Naive thymus-derived CD8-positive, alpha-beta T cell (primary cell): ENCODE measurements at regions of chr14 and their contacts with region 1.

Region 1: DNA sequence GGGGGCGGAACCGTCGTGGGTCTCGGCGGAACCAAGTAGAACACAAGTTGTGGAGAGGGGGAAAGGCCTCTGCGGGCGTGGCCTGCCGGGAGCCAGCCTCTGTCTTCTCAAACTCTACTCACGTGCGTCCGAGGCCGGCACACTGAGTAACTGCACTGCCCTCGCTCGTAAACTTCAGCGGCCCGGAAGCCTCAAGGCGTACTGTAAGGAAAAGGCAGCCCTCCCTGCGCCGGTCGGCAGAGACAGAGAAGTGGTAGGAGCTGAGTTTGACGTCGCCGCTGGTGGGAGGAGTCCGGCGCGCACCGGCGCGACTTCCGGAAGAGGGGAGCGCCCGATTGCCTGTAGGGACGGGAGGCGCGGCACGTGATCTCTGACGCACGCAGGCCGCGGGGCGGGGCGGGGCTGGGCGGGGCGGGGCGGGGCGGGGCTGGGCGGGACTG is at the start of gene FBXO33:
- DNase-seq: peak; percentile 92 to 99 (median 98)
- ATAC-seq: peak; percentile 81 to 84
- H3K4me3 Mint-ChIP-seq: peak within 1 kb of the TSS; percentile 88 to 100 (median 99)
- H3K27ac Mint-ChIP-seq: peak within 1 kb of the TSS; percentile 100
- H3K4me1 Mint-ChIP-seq: peaks cover 21 to 50% (median 41%) of the 10 kb centered on the region in 4 donors
- H3K27me3 Mint-ChIP-seq: no peaks in the 10 kb centered on the region
- polyA plus RNA-seq, gene FBXO33: 14.7 to 24.1 (median 19.3) TPM

Region 2: GRCh38 chr14:39102969-39103957 is 328.9 kb before region 1 on chr14 and contains the start of gene SEC23A:
- POLR2A ChIA-PET with region 1: interaction called, 29 read pairs
- DNase-seq: peak; percentile 67 to 91 (median 74)
- ATAC-seq: peak; percentile 90 to 93
- H3K4me3 Mint-ChIP-seq: peak within 1 kb of the TSS; percentile 89 to 98 (median 96)
- H3K27ac Mint-ChIP-seq: peak within 1 kb of the TSS; percentile 93 to 99 (median 97)
- H3K4me1 Mint-ChIP-seq: peaks cover 20 to 57% (median 44%) of the 10 kb centered on the region in 4 donors
- H3K27me3 Mint-ChIP-seq: no peaks in the 10 kb centered on the region
- polyA plus RNA-seq, gene SEC23A: 21.0 to 28.5 (median 23.6) TPM

Region 3: DNA sequence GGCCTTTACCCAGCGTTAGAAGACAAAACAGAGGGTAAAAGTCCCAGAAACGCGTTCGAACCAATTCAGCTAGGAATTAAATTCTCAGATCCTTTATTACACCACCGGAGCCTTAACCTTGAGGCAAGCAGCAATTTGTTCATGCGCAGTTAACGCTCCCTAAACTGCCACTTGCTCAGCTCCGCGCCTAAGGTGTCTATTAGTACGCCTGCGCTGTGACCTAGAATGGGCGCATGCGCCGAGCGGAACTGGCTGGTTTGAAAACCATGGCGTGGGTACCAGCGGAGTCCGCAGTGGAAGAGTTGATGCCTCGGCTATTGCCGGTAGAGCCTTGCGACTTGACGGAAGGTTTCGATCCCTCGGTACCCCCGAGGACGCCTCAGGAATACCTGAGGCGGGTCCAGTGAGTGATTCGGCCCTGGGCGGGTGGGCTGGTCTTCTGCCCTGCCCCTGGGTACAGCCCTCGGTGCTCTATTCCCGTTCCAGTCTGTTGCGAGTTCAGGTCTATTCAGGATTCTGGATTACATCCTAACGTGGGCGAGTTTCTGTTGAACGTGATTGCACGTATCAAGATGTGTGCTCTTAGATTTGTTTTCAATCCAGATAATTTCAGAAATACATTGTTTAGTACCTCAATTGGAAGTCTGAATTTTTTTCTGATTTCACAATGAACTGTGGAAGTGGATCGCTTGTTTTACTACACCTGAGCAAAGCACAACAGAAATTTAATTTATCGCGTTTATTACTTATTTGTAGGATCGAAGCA is 317.9 kb before region 1 on chr14 and contains the start of gene GEMIN2:
- POLR2A ChIA-PET with region 1: interaction called, 24 read pairs
- DNase-seq: peak; percentile 87 to 97 (median 94)
- ATAC-seq: peak; percentile 97 to 98
- H3K4me3 Mint-ChIP-seq: peak within 1 kb of the TSS; percentile 94 to 99 (median 97)
- H3K27ac Mint-ChIP-seq: peak within 1 kb of the TSS; percentile 92 to 98 (median 97)
- H3K4me1 Mint-ChIP-seq: peaks cover 6 to 33% (median 19%) of the 10 kb centered on the region in 4 donors
- H3K27me3 Mint-ChIP-seq: no peaks in the 10 kb centered on the region
- polyA plus RNA-seq, gene GEMIN2: 10.5 to 17.0 (median 12.7) TPM

Region 4: DNA sequence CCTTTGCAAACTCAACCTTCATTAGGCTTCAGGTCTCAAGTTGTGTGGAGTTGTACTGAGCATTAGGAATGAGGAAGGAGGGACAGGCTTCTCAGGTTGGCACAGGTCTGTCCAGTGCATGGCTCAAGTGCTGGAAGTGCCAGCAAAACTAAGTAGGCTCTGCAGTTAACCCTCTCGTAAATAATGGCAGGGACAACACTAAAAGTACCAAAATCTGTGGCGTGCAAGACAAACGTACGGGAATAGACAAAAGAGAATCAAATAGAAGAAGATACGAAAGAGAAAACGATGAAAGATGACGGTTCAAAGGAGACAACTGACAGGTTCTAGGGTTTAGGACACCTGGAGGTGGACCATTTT is 262.7 kb before region 1 on chr14:
- POLR2A ChIA-PET with region 1: interaction called, 59 read pairs
- DNase-seq: no peak
- ATAC-seq: no peak
- H3K4me3 Mint-ChIP-seq: peak overlapping the region; percentile 82 to 99 (median 94)
- H3K27ac Mint-ChIP-seq: peak overlapping the region; percentile 98 to 100 (median 99)
- H3K4me1 Mint-ChIP-seq: peaks cover 23 to 58% (median 45%) of the 10 kb centered on the region in 4 donors
- H3K27me3 Mint-ChIP-seq: no peaks in the 10 kb centered on the region

Region 5: DNA sequence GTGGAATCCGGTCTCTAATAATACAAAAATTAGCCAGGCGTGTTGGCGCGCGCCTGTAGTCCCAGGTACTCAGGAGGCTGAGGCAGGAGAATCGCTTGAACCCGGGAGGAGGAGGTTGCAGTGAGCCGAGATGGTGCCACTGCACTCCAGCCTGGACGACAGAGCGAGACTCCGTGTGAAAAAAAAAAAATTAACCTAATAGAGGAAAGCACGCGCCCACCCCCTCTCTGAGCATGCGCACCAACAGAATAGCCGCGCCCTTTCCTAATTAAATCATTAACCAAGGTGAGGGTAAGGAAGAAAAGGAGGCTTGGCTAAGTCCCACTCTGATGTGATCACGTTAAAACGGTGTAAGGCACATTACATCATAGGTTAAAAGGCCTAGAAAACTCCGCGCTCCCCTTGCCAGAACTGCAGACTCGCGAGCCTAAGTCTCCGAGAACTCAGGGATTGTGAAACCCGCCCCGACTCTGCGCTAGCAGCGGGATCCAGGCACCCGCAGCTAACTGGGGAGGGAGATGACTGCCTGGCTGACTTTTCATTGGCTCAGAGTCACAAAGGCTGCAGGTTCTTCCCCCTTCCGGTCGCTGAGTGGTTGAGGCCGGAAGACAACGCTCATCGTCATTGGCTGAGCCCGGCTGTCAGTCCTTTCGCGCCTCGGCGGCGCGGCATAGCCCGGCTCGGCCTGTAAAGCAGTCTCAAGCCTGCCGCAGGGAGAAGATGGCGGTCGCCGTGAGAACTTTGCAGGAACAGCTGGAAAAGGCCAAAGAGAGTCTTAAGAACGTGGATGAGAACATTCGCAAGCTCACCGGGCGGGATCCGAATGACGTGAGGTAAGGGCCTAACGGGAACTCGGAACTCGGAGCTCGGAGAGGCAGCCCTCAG is 257.4 kb before region 1 on chr14 and contains the start of gene PNN:
- POLR2A ChIA-PET with region 1: interaction called, 59 read pairs
- DNase-seq: peak; percentile 85 to 99 (median 98)
- ATAC-seq: peak; percentile 86 to 90
- H3K4me3 Mint-ChIP-seq: peak within 1 kb of the TSS; percentile 96 to 100 (median 98)
- H3K27ac Mint-ChIP-seq: peak within 1 kb of the TSS; percentile 98 to 100 (median 99)
- H3K4me1 Mint-ChIP-seq: peaks cover 14 to 54% (median 41%) of the 10 kb centered on the region in 4 donors
- H3K27me3 Mint-ChIP-seq: peaks cover 0 to 2% (median 0%) of the 10 kb centered on the region in 5 donors
- polyA plus RNA-seq, gene PNN: 15.4 to 24.2 (median 18.9) TPM

Region 6: GRCh38 chr14:39229222-39229543 is 203.0 kb before region 1 on chr14:
- POLR2A ChIA-PET with region 1: interaction called, 11 read pairs
- DNase-seq: peak in 9 of 10 donors; percentile 6 to 72 (median 40)
- ATAC-seq: peak; percentile 94 to 95
- H3K4me3 Mint-ChIP-seq: peak overlapping the region in 6 of 10 donors; percentile 1 to 30 (median 8)
- H3K27ac Mint-ChIP-seq: peak overlapping the region; percentile 60 to 88 (median 82)
- H3K4me1 Mint-ChIP-seq: peaks cover 14 to 45% (median 33%) of the 10 kb centered on the region in 4 donors
- H3K27me3 Mint-ChIP-seq: no peaks in the 10 kb centered on the region

Region 7: GRCh38 chr14:39266871-39267591 is 165.2 kb before region 1 on chr14:
- POLR2A ChIA-PET with region 1: interaction called, 71 read pairs
- DNase-seq: peak; percentile 48 to 84 (median 70)
- ATAC-seq: peak; percentile 80 to 85
- H3K4me3 Mint-ChIP-seq: peak overlapping the region; percentile 69 to 97 (median 93)
- H3K27ac Mint-ChIP-seq: peak overlapping the region; percentile 92 to 98 (median 96)
- H3K4me1 Mint-ChIP-seq: peaks cover 20 to 58% (median 51%) of the 10 kb centered on the region in 4 donors
- H3K27me3 Mint-ChIP-seq: no peaks in the 10 kb centered on the region

Region 8: DNA sequence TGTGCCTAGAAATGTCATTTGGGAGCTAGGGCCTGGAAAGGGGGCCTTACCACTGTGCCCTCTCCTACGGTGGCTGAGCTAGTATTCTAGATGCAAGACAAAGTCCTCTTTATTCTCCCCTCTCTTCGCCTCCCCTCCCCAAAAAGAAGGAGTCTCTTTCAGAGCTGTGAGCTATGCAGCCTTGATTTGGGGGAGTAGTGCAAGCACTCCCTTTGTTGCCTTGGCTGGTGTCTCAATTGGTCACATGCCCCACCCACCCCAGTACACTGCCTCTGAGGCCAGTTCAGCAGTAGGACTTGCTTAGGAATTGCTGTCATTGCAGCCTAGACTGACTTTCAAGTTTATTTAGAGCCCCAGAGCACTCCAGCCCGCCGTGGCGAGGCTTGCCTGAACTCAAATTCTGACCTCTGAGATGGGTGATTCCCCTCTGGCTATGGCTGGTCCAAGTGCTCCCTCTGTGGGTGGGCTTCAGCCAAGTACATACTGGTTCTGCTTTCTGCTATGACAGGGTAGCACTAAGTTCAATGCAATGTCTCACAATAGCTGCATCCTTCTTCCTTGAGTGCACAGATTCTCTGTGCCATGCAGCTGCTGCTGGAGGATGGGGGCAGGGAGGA is 37.0 kb after region 1 on chr14:
- POLR2A ChIA-PET with region 1: no interaction called
- DNase-seq: peak in 9 of 10 donors; percentile 5 to 72 (median 22)
- ATAC-seq: peak; percentile 43 to 72
- H3K4me3 Mint-ChIP-seq: no peak overlapping the region
- H3K27ac Mint-ChIP-seq: peak overlapping the region in 1 of 10 donors; percentile 23
- H3K4me1 Mint-ChIP-seq: peaks cover 0 to 3% (median 0%) of the 10 kb centered on the region in 4 donors
- H3K27me3 Mint-ChIP-seq: peaks cover 4 to 30% (median 15%) of the 10 kb centered on the region in 5 donors